Gastrocnemius medialis (tissue), 4 donors: ENCODE measurements at regions of chr10 and their contacts with region 1.

Region 1: DNA sequence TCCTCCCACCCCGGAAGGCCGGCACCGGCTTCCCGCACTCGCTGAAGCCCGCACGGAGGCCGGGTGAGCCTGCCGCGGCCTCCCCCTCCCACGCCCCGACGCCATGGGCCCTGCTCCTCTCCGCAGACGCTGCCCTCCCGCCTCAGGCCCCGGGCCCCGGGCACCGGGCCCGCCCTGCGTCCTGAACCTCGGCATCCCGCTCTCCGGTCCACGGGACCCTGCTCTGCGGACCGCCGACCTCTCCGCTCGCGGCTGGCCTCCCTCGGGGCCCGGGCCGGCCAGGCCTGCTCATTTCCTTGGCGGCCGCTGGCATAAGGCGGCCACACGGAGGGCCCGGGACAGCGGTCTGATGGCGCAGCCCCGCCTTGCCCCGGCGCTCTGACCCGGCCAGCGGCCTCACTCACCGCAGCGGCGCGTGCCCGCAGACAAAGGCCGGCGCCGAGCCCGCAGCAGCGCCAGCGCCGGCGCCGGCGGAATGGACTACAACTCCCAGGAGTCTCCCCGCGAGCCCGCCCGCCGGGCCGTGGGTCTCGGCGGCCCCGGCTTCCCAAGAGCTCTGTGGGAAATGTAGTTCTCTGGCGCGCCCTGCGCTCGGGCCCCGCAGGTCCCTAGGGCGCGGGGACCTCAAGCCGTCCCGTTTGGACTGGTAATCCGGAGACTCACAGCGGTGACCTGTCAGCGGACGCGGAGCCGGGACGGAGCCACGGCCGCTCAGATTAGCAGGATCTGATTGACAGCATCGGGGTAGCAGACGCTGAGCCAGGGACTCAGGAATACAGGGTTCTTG is at the start of gene ZNF32:
- DNase-seq: peak; percentile 71 to 77
- ATAC-seq: peak; percentile 94 to 95
- H3K4me3 ChIP-seq: peak within 1 kb of the TSS; percentile 69 to 99 (median 86)
- H3K27ac ChIP-seq: peak within 1 kb of the TSS; percentile 84 to 94 (median 94)
- H3K4me1 ChIP-seq: peaks cover 10 to 15% of the 10 kb centered on the region in 2 donors
- H3K27me3 ChIP-seq: peaks cover 0 to 2% (median 0%) of the 10 kb centered on the region in 3 donors
- CTCF ChIP-seq: peak in 1 of 5 experiments; percentile 9
- POLR2A ChIP-seq: peak; percentile 56 to 61
- total RNA-seq, gene ZNF32: 38.1 to 65.5 (median 61.5) TPM

Region 2: GRCh38 chr10:43606322-43607198 is 42.0 kb before region 1 on chr10 and contains the start of gene ZNF485:
- in situ Hi-C with region 1: no loop called
- intact Hi-C with region 1: loop called (anchors 2 kb)
- DNase-seq: peak; percentile 35 to 54
- ATAC-seq: peak; percentile 88 to 90
- H3K4me3 ChIP-seq: peak within 1 kb of the TSS; percentile 80 to 100 (median 83)
- H3K27ac ChIP-seq: peak within 1 kb of the TSS; percentile 75 to 92 (median 82)
- H3K4me1 ChIP-seq: peaks cover 9 to 10% of the 10 kb centered on the region in 2 donors
- H3K27me3 ChIP-seq: no peaks in the 10 kb centered on the region
- CTCF ChIP-seq: no peak
- POLR2A ChIP-seq: peak in 1 of 2 donors; percentile 28
- total RNA-seq, gene ZNF485: 2.6 to 3.7 (median 2.9) TPM

Region 3: DNA sequence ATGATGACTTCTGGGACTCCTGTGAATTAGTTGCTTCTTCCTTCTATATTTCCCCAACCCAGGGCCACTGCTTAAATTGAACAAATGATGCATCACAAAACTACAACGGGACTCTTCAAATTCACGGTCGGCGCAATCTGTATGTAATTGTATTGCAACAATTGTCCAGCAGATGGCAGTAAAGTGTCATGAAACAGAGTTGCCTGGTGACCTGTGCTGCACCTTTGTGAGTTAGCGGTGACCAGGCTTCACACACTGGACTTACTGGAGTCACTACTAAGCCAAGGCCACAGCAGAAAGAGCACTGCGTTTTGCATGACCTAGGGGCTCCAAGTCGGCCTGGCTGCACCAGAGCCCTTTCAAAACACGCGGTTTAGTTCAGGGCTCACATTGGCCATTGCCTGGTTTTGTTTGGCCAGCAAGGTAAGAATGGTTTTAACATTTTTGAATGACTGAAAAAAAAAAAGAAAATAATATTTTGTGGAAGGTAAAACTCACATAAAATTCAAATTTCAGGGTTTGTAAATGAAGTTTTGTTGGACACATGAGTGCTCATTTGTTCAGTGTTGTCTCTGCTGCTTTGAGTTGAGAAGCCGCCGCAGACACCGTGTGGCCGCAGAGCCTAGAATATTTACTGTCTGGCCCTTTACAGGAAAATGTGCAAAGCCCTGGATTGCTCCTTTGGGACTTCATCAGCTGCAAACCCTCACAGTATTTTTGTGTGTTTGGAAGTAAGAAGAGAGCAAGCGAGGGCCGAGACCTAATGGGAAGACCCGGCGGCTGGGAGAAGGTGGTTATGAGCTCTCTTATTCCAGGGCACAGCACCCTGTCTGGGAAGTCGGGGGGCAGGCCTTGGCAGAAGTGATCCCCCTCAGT is 23.3 kb after region 1 on chr10:
- in situ Hi-C with region 1: no loop called
- intact Hi-C with region 1: no loop called
- DNase-seq: peak; percentile 14 to 44
- ATAC-seq: peak; percentile 73 to 83
- H3K4me3 ChIP-seq: no peak overlapping the region
- H3K27ac ChIP-seq: no peak overlapping the region
- H3K4me1 ChIP-seq: no peaks in the 10 kb centered on the region
- H3K27me3 ChIP-seq: peaks cover 8 to 16% (median 8%) of the 10 kb centered on the region in 3 donors
- CTCF ChIP-seq: peak; percentile 76 to 88 (median 82)
- POLR2A ChIP-seq: no peak